Natural killer cell (primary cell): ENCODE measurements at regions of chr3 and their contacts with region 1.

Region 1: DNA sequence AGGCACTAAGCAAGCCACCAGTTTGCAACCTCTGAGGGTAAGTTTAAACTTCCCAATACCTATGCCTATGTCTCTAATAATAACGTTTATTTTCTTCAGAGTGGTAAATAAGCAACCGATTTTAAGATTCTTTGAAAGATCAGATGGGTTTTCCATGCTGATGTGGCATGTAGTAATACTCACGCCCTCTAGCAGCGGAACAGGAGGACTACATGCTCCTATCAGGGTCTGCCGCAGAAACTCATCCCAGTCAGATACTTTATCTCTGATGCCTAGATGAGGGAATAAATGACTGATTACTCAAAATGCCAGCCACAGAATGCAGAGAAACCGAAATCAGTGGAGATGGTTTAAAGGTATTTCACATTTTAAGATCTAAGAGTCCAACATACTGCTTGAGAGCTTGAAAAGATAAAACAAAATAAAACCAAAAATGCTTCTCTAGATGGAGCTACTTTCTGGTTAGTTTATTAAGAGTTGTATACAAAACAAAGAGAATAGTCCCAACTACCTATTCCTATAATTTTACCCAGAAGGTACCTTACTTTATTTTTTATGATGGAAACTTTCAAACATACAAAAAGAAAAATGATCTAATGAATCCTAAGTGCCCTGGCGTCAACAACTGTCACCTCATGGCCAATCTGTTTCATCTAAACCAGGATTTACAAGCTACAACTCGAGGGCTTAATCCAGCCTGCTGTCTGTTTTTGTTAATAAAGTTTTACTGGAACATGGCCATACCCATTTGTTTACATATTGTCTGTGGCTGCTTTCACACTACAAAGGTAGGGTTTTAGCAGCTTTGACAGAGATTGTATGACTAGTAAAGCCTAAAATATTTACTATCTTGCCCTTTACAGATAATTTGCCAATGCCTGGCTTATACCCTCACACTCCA is 37.5 kb upstream of the STIMATE start:
- DNase-seq: peak in 1 of 2 donors; percentile 79
- ATAC-seq: peak; percentile 81 to 98 (median 94)
- H3K4me3 ChIP-seq: no peak overlapping the region
- H3K4me3 Mint-ChIP-seq: no peak overlapping the region
- H3K27ac ChIP-seq: no peak overlapping the region
- H3K27ac Mint-ChIP-seq: peak overlapping the region in 1 of 2 donors; percentile 45
- H3K4me1 ChIP-seq: no peaks in the 10 kb centered on the region
- H3K4me1 Mint-ChIP-seq: peaks cover 7 to 9% of the 10 kb centered on the region in 2 donors
- H3K27me3 ChIP-seq: no peaks in the 10 kb centered on the region
- H3K27me3 Mint-ChIP-seq: no peaks in the 10 kb centered on the region
- CTCF ChIP-seq: peak; percentile 84

Region 2: GRCh38 chr3:52721002-52721729 is 213.7 kb before region 1 on chr3:
- intact Hi-C with region 1: no loop called
- DNase-seq: peak in 1 of 2 donors; percentile 55
- ATAC-seq: peak in 2 of 3 donors; percentile 55 to 70
- H3K4me3 ChIP-seq: no peak overlapping the region
- H3K4me3 Mint-ChIP-seq: peak overlapping the region; percentile 4
- H3K27ac ChIP-seq: no peak overlapping the region
- H3K27ac Mint-ChIP-seq: peak overlapping the region; percentile 50 to 72
- H3K4me1 ChIP-seq: peaks cover 8% of the 10 kb centered on the region
- H3K4me1 Mint-ChIP-seq: peaks cover 15 to 17% of the 10 kb centered on the region in 2 donors
- H3K27me3 ChIP-seq: no peaks in the 10 kb centered on the region
- H3K27me3 Mint-ChIP-seq: no peaks in the 10 kb centered on the region
- CTCF ChIP-seq: no peak

Region 3: DNA sequence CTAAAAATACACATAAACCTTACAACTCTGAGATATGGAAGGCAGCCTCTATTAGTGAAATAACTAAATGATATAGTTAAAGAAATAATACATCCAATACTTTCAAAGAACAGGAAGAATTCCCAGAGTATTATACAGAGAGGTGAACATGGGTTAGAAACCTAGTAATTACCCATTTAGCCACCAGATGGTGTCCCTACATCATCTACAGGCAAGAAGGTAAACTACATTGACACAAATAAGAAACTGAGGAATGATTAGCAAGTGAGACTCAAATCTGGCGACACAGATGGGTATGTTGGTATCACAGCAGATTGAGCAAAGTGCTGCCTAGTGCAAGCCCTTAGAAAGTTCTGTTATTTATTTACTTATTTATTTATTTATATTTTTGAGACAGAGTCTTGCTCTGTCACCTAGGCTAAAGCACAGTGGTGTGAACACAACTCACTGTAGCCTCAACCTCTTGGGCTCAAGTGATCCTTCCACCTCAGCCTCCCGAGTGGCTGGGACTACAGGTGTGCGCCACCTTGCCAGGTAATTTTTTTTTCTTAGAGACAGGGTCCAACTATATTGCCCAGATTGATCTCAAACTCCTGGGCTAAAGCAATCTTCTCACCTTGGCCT is 192.3 kb before region 1 on chr3:
- intact Hi-C with region 1: loop called (anchors 1 kb)
- DNase-seq: peak in 1 of 2 donors; percentile 62
- ATAC-seq: peak in 1 of 3 donors; percentile 52
- H3K4me3 ChIP-seq: no peak overlapping the region
- H3K4me3 Mint-ChIP-seq: no peak overlapping the region
- H3K27ac ChIP-seq: no peak overlapping the region
- H3K27ac Mint-ChIP-seq: no peak overlapping the region
- H3K4me1 ChIP-seq: no peaks in the 10 kb centered on the region
- H3K4me1 Mint-ChIP-seq: no peaks in the 10 kb centered on the region
- H3K27me3 ChIP-seq: no peaks in the 10 kb centered on the region
- H3K27me3 Mint-ChIP-seq: no peaks in the 10 kb centered on the region
- CTCF ChIP-seq: peak; percentile 49

Region 4: GRCh38 chr3:52845691-52846431 is 89.0 kb before region 1 on chr3:
- intact Hi-C with region 1: loop called (anchors 10 kb)
- DNase-seq: peak in 1 of 2 donors; percentile 47
- ATAC-seq: peak in 1 of 3 donors; percentile 50
- H3K4me3 ChIP-seq: no peak overlapping the region
- H3K4me3 Mint-ChIP-seq: no peak overlapping the region
- H3K27ac ChIP-seq: no peak overlapping the region
- H3K27ac Mint-ChIP-seq: no peak overlapping the region
- H3K4me1 ChIP-seq: peaks cover 14% of the 10 kb centered on the region
- H3K4me1 Mint-ChIP-seq: peaks cover 9 to 20% of the 10 kb centered on the region in 2 donors
- H3K27me3 ChIP-seq: no peaks in the 10 kb centered on the region
- H3K27me3 Mint-ChIP-seq: no peaks in the 10 kb centered on the region
- CTCF ChIP-seq: peak; percentile 23

Region 5: DNA sequence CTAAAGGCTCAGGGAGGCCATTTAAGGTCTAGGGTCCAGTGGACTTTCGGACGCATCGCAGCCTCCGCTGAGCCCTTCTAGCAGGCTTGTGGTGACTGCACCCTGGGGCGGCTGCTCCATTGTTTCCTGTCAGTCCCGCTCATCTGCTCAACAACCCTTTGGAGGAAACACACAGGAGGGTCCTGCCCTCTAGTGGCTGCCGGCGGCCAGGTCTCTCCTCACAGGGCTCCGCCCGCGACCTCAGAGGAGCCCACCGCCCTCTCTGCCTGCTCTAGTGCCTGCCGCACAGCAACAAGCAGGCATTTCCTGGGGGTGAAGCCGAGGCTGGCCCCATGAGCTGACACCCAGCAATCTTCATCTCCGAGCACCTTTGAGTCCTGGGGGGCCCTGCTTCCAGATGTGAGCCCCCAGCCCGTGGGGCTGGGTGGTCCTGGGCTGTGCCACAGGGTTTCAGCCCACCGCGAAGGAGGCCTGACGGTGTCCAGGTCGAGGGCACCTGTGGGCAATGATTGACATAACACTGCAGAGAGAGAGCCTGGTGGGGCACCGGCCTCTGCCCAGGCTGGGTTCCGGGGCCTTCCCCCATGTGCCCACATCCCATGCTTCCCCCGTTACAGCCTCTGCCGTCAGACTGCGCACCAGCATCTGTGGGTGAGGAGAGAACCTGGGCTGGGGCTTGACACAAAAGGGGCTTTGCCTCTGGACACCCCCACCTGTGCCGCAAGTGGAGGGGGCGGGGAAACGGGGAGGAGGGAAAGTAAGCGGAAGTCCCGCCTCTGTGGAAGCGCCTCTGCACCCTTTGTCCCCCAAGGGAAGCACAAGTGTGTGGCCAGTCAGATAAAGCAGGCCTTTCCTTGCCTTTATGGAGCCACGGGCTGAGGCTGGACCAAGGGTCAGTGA is 138.0 kb after region 1 on chr3:
- intact Hi-C with region 1: loop called (anchors 5 kb)
- DNase-seq: peak; percentile 77 to 91
- ATAC-seq: peak; percentile 85 to 92 (median 86)
- H3K4me3 ChIP-seq: peak overlapping the region; percentile 81
- H3K4me3 Mint-ChIP-seq: peak overlapping the region; percentile 95
- H3K27ac ChIP-seq: peak overlapping the region; percentile 84
- H3K27ac Mint-ChIP-seq: peak overlapping the region; percentile 92 to 96
- H3K4me1 ChIP-seq: peaks cover 25% of the 10 kb centered on the region
- H3K4me1 Mint-ChIP-seq: peaks cover 14 to 29% of the 10 kb centered on the region in 2 donors
- H3K27me3 ChIP-seq: no peaks in the 10 kb centered on the region
- H3K27me3 Mint-ChIP-seq: peaks cover 0 to 3% of the 10 kb centered on the region in 2 donors
- CTCF ChIP-seq: peak; percentile 95